Gastrocnemius medialis (tissue), 4 donors: ENCODE measurements at regions of chr6 and their contacts with region 1.

Region 1: DNA sequence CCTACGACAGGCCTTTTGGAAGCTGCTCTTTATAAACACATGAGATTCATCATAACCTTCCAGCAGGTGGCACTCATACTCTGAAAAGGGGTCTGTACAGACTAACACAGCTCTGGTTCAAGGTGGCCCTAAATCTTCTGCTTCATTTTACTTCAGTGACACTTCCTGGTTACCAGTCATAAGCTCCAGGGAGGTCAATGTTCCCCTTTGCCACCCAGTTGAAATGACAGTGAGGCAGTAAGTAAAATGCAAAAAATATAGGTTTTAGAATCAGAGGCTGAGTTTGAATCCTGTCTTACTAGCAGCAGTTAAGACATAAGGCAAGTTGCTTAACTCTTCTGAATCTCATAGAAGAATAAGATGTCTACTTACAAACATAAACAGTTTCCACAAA is 132.8 kb downstream of the CDK19 start:
- DNase-seq: peak; percentile 30 to 46
- ATAC-seq: peak; percentile 98 to 99
- H3K4me3 ChIP-seq: no peak overlapping the region
- H3K27ac ChIP-seq: peak overlapping the region in 3 of 4 donors; percentile 33 to 59 (median 34)
- H3K4me1 ChIP-seq: peaks cover 16% of the 10 kb centered on the region in 2 donors
- H3K27me3 ChIP-seq: no peaks in the 10 kb centered on the region
- CTCF ChIP-seq: peak; percentile 58 to 76 (median 71)
- POLR2A ChIP-seq: no peak

Region 2: GRCh38 chr6:109912118-109912517 is 770.3 kb before region 1 on chr6:
- in situ Hi-C with region 1: no loop called
- intact Hi-C with region 1: no loop called
- DNase-seq: no peak
- ATAC-seq: no peak
- H3K4me3 ChIP-seq: no peak overlapping the region
- H3K27ac ChIP-seq: no peak overlapping the region
- H3K4me1 ChIP-seq: no peaks in the 10 kb centered on the region
- H3K27me3 ChIP-seq: no peaks in the 10 kb centered on the region
- CTCF ChIP-seq: no peak
- POLR2A ChIP-seq: no peak

Region 3: DNA sequence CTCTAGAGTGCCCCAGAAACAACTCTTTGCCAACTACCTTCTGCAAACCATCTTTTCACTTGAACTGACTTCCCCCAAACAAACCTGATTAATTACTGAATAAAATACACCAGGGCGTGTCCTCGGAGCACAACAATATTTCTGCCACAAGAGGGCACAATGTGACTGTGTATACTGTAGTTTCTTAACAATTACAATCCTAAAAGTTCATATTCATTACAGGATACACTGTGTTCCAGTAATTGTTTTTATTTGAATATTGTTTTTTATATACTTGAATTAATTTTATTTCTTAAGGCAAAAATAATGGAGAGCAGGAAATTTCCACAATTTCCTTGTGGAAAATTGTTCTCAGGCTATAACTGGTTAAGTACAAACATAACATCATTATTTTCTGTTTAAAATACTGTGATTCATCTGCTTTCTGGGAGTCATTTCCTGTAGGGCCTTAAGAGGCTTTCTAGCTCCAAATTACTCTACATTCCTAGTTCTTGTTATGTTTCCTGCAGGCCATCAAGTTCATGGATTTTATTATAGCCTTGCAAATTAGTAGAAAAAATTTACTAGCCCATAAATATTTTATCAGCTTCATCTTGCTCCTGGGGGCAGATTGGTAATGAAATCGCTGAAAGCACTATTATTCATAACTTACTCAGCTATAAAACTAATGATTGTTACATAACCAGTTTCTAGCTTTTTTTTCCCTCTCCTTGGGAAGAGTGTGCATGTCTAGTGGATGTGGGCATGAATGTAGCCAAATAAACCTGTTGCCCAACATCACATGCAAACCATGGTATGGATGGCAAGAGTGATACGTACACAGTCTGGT is 154.1 kb before region 1 on chr6:
- in situ Hi-C with region 1: loop called in 2 of 4 experiments (anchors 10 kb)
- intact Hi-C with region 1: loop called (anchors 5 kb)
- DNase-seq: no peak
- ATAC-seq: peak; percentile 66 to 78
- H3K4me3 ChIP-seq: no peak overlapping the region
- H3K27ac ChIP-seq: peak overlapping the region in 1 of 4 donors; percentile 15
- H3K4me1 ChIP-seq: peaks cover 0 to 3% of the 10 kb centered on the region in 2 donors
- H3K27me3 ChIP-seq: no peaks in the 10 kb centered on the region
- CTCF ChIP-seq: peak; percentile 53 to 68 (median 61)
- POLR2A ChIP-seq: no peak

Region 4: GRCh38 chr6:110873981-110874879 is 191.8 kb after region 1 on chr6 and contains the start of gene AMD1:
- in situ Hi-C with region 1: loop called in 1 of 4 experiments (anchors 5 kb)
- intact Hi-C with region 1: loop called (anchors 2 kb)
- DNase-seq: peak; percentile 98
- ATAC-seq: peak; percentile 71 to 79
- H3K4me3 ChIP-seq: peak within 1 kb of the TSS; percentile 79 to 94 (median 87)
- H3K27ac ChIP-seq: peak within 1 kb of the TSS; percentile 92 to 97 (median 96)
- H3K4me1 ChIP-seq: peaks cover 24 to 29% of the 10 kb centered on the region in 2 donors
- H3K27me3 ChIP-seq: no peaks in the 10 kb centered on the region
- CTCF ChIP-seq: no peak
- POLR2A ChIP-seq: peak; percentile 99
- total RNA-seq, gene AMD1: 33.5 to 57.1 (median 45.1) TPM

Region 5: DNA sequence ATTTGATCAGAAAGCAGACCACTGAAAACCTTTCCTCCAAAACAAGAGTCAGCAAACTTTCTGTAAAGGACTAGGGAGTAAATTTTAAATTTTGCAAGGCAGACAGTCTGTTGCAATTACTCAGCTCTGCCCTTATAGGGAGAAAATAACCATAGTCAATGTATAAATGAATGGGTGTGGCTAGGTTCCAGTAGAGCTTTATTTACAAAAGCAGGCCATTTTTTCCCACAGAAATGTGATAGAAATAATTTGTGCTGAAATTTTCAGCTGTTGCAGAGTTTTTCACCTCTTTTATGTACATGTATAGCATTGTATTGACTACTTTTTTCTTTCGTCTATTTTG is 199.8 kb after region 1 on chr6:
- in situ Hi-C with region 1: loop called in 2 of 4 experiments (anchors 5 to 10 kb)
- intact Hi-C with region 1: no loop called
- DNase-seq: no peak
- ATAC-seq: no peak
- H3K4me3 ChIP-seq: no peak overlapping the region
- H3K27ac ChIP-seq: no peak overlapping the region
- H3K4me1 ChIP-seq: peaks cover 50 to 65% of the 10 kb centered on the region in 2 donors
- H3K27me3 ChIP-seq: no peaks in the 10 kb centered on the region
- CTCF ChIP-seq: no peak
- POLR2A ChIP-seq: no peak

Region 6: GRCh38 chr6:110944681-110945151 is 262.3 kb after region 1 on chr6:
- in situ Hi-C with region 1: loop called in 3 of 4 experiments (anchors 5 kb)
- intact Hi-C with region 1: loop called (anchors 1 kb)
- DNase-seq: no peak
- ATAC-seq: no peak
- H3K4me3 ChIP-seq: no peak overlapping the region
- H3K27ac ChIP-seq: no peak overlapping the region
- H3K4me1 ChIP-seq: no peaks in the 10 kb centered on the region
- H3K27me3 ChIP-seq: no peaks in the 10 kb centered on the region
- CTCF ChIP-seq: no peak
- POLR2A ChIP-seq: no peak

Region 7: GRCh38 chr6:110949679-110950285 is 267.3 kb after region 1 on chr6:
- in situ Hi-C with region 1: loop called (anchors 5 kb)
- intact Hi-C with region 1: loop called (anchors 1 kb)
- DNase-seq: no peak
- ATAC-seq: no peak
- H3K4me3 ChIP-seq: no peak overlapping the region
- H3K27ac ChIP-seq: no peak overlapping the region
- H3K4me1 ChIP-seq: no peaks in the 10 kb centered on the region
- H3K27me3 ChIP-seq: no peaks in the 10 kb centered on the region
- CTCF ChIP-seq: peak in 4 of 5 experiments; percentile 24 to 59 (median 38)
- POLR2A ChIP-seq: no peak

Region 8: DNA sequence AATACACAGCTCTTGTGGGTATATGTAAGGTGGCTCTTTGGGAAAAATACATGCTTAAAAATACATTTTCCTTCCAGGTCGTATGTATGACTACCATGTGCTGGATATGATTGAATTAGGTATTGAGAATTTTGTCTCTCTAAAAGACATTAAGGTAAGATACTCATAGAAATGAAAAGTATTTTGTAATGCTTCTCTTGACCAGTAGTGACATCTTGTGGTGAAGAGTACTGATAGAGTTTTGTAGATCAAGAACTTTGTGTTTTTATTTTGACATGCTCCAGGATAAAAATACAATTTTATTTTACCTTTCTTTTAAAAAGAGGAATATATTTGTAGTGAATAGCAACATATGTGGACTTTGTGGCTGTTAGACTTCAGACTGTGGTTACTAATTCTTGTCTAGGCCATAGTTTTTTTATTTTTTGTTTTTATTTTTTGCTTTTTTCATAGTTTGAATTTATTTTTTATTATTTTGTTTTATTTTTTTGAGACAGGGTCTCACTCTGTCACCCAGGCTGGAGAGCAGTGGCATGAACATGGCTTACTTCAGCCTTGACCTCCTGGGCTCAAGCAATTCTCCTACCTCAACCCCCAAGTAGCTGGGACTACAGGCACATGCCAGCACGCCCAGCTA is 317.3 kb after region 1 on chr6:
- in situ Hi-C with region 1: no loop called
- intact Hi-C with region 1: loop called (anchors 5 kb)
- DNase-seq: no peak
- ATAC-seq: no peak
- H3K4me3 ChIP-seq: no peak overlapping the region
- H3K27ac ChIP-seq: no peak overlapping the region
- H3K4me1 ChIP-seq: no peaks in the 10 kb centered on the region
- H3K27me3 ChIP-seq: no peaks in the 10 kb centered on the region
- CTCF ChIP-seq: peak in 4 of 5 experiments; percentile 24 to 46 (median 41)
- POLR2A ChIP-seq: no peak